Lower leg skin (tissue), 4 donors: ENCODE measurements at regions of chr12 and their contacts with region 1.

Region 1: DNA sequence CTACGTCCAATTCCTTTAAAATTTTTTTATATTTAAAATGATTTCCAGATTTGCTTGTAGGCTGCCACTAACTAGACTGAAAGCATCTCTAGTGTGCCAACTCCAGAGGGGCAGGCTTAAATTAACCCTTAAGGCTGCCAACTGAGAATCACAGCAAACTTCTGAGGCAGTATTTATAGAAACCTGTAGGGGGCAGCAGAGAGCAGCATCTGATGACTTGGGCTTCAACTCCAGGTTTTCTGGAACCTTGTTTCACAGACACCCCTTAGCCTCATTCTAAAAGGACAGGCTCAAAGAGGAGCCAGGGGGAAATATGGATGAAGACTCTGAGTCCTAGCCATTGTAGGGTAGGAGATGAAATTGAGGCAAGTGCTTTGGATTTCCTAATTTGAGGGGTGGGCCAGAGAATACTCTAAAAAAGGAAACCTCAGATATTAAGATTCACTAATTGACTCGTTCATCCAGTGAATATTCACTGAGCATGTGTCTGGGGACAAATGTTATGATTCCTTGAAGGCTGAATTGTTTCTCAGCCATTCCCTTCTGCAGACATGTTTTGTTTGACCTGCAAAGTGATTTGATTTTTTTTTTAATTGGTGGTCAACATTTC is 63.3 kb upstream of the HSPB8 start:
- DNase-seq: peak in 1 of 2 donors; percentile 26
- H3K4me3 ChIP-seq: no peak overlapping the region
- CTCF ChIP-seq: peak in 1 of 3 donors; percentile 46
- POLR2A ChIP-seq: no peak

Region 2: GRCh38 chr12:119412811-119413794 is 297.7 kb after region 1 on chr12:
- intact Hi-C with region 1: loop called (anchors 5 kb)
- DNase-seq: peak; percentile 39 to 90
- H3K4me3 ChIP-seq: no peak overlapping the region
- CTCF ChIP-seq: peak in 1 of 3 donors; percentile 54
- POLR2A ChIP-seq: no peak